Cardiac septum (tissue), 1 donor: ENCODE measurements at regions of chr1 and their contacts with region 1.

Region 1: DNA sequence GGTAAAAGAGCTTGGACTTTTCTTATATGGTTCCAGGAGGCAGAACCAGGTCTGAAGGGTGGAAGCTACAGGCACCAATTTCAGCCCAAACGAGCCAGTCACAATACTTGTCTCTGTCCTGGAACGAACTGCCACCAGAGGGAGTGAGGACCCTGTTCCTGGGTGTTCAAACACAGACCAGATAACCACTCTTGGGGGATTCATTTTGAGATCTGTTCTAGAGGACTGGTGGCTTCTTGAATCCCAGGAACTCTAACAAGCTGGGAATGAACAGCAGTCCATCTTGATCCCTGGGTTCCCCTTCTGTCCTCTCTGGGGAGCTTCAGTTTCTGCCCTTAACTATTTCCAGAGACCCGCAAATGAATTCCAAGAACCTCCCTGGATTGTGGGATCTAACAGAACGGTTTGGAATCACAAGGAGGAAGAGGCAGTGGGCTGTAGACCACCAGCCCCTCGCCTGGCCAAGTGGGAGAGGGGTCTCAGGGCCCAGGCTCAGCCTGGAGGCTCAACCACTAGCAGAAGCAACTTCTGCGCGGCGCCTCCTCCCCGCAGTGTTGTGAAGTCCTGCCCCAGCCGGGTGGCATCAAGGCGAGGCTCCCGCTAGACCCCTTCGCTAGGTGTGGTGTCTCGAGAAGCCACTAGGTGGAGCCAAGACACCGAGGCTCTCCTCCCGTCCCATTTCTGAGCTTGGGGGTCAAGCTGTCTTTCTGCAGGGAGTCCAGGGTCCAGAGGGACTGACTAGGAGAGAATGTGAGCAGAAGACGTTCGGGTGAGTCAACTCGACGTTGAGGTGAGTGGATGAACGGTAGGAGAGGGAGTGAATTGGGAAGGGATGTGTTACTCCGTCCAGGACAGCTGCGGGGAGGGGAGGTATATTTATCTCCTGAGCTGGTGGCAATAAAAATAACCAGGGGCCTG is 12.1 kb upstream of the NES start:
- DNase-seq: peak; percentile 82

Region 2: GRCh38 chr1:156728597-156729462 is 39.5 kb after region 1 on chr1 and contains the start of gene ISG20L2:
- intact Hi-C with region 1: loop called (anchors 1 kb)
- DNase-seq: peak; percentile 98
- total RNA-seq, gene ISG20L2: 12.4 TPM